Activated CD8-positive, alpha-beta T cell treated with anti-CD3 and anti-CD28 coated beads, Interleukin-2, amount 10 ng/mL, durations not matched to agents 7 days and 5 days (primary cell): ENCODE measurements at regions of chr1 and their contacts with region 1.

Region 1: DNA sequence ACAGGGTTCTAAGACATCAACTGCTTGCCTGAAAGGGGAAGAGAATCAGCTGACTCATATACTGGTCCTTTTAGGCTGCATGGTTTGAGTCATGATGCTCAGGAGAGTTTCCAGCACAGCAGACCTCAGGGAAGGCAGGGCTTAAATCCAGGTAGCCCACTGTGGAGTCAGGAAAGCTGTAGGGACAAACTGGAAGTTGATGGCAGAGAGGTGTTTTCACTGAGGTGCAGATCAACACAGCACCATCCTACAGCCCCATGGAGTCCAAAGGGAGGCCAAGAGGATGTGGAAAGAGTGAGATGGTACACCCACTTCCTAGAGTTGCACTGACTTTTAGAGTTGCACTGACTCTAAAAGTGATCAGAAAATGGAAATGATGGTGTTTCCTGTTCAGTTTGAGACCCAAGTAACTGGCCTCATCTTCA is 252.4 kb upstream of the DUSP10 start:
- DNase-seq: peak; percentile 23
- ATAC-seq: no peak
- H3K4me3 Mint-ChIP-seq: no peak overlapping the region
- H3K27ac Mint-ChIP-seq: no peak overlapping the region
- H3K4me1 Mint-ChIP-seq: peaks cover 29% of the 10 kb centered on the region
- H3K27me3 Mint-ChIP-seq: no peaks in the 10 kb centered on the region

Region 2: DNA sequence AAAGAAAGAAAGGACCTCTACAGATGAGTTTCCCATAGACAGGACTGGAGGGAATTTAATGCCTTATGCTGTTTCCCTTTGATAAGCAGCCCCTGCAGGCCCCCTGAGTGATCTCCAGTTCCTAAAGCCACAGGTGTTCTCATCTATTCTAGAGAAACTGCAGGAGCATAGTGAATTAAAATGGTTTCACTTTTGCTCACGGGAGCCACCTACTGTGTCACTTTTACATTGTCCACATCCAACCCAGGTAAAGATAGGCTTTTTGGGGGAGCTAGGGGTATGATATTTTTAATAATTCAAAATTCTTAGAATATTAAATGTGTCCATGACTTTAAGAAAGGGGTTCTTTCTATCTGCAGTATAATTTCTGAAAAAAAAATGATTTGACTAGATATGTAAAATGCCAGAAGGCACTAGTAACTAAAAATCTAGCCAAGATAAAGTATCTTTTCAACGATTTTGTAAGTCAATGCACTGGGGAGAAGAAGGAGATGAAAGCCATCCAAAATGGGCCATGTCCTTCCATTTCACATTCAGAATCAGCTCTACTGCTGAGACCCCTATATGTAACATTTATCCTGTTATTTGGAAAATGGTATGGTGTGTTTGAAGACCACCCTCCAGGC is 14.9 kb after region 1 on chr1:
- CTCF ChIA-PET with region 1: interaction called, 32 read pairs
- POLR2A ChIA-PET with region 1: no interaction called
- DNase-seq: peak; percentile 64
- ATAC-seq: peak; percentile 81
- H3K4me3 Mint-ChIP-seq: no peak overlapping the region
- H3K27ac Mint-ChIP-seq: no peak overlapping the region
- H3K4me1 Mint-ChIP-seq: peaks cover 3% of the 10 kb centered on the region
- H3K27me3 Mint-ChIP-seq: peaks cover 12% of the 10 kb centered on the region